ENCODE measurements at regions of chr12 and their contacts with region 1.

Region 1: GRCh38 chr12:1093166-1093751 is 102.2 kb downstream of the ERC1 start:
- DNase-seq: peak in 10 of 42 donors; percentile 7 to 71 (median 38)

Region 2: GRCh38 chr12:990661-991349 is 102.5 kb before region 1 on chr12 and contains the start of gene ERC1:
- intact Hi-C with region 1: loop called (anchors 10 kb)
- DNase-seq: peak; percentile 62 to 96 (median 90)

Measured in head of caudate nucleus (tissue), 42 donors.